HEK293 (cell line): ENCODE measurements at regions of chr2 and their contacts with region 1.

Region 1: DNA sequence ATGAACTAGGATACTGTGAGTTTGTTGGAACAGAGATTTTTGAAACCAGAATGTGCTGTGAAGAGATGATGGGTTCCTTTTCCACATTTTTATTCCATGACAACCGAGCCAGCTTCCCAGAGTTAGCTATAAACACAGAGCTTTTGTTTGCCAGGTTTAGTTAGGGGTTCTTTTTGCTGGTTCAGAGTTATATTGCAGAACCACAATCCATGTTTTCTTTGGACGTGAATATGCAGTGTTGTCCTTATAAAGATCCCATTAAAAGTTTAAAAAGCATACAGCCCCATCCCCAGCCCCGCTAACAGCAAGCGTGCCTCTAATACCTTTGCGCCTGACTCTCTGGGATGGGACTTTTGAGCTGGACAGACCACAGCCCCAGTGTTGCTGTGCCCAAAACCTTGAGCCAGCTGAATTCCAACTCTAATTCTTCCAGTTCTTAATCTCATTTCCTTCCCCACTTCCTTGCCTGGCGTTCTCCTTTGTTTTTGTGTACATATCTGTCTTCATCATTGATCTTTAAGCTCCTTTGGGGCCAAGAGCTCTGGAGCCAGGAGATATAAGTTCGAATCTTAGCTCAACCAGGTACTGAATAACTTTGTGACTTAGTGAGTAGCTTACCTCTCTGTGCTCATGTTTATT is 72.3 kb downstream of the SPATS2L start:
- H3K4me3 ChIP-seq: no peak overlapping the region
- H3K27ac ChIP-seq: peak overlapping the region; percentile 43; the same call in 1 of the 2 replicates
- H3K4me1 ChIP-seq: peaks cover 42% of the 10 kb centered on the region
- CTCF ChIP-seq: no peak

Region 2: DNA sequence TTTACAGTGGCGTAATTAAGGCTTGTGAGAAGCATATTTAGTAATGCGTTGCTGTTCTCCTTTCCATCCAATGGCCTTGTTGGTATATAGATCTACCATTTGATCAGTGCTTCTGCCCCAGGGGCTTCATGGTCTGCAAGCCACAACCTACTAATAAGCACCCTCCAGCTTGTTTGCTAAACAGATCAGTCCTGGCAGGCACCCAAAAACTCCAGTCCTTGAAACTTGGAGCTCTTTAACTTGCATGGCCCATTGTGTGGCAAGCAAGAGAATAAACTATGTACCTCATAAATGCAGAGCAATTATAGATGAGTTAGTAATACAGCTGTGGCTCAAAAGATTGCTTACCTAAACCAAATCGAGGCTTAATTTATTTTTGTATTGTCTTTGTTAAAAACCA is 686.3 kb before region 1 on chr2:
- CTCF ChIA-PET with region 1: no interaction called
- POLR2A ChIA-PET with region 1: no interaction called
- H3K4me3 ChIP-seq: no peak overlapping the region
- H3K27ac ChIP-seq: no peak overlapping the region
- H3K4me1 ChIP-seq: peaks cover 3% of the 10 kb centered on the region; the same call in 1 of the 2 replicates
- CTCF ChIP-seq: no peak

Region 3: DNA sequence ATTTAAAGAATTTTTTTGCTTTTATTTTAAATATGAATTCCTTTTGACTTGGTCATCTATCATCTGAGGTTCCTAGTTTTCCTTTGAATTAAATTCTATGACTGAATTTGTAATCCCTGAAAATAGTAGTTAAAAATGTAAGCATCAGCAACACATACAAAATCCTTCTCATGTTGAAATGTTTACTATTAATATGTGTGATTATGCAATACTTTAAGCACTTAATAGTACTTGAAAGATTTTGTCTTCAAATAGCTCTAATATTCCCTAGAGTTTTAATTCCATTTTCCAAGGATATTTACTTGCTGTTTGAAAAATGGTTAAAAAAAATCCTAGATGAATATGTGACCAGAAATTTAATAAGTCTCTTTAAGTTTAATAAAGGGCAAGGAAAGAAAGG is 98.9 kb before region 1 on chr2:
- CTCF ChIA-PET with region 1: no interaction called
- POLR2A ChIA-PET with region 1: interaction called, 10 read pairs
- H3K4me3 ChIP-seq: no peak overlapping the region
- H3K27ac ChIP-seq: no peak overlapping the region
- H3K4me1 ChIP-seq: no peaks in the 10 kb centered on the region
- CTCF ChIP-seq: no peak

Region 4: DNA sequence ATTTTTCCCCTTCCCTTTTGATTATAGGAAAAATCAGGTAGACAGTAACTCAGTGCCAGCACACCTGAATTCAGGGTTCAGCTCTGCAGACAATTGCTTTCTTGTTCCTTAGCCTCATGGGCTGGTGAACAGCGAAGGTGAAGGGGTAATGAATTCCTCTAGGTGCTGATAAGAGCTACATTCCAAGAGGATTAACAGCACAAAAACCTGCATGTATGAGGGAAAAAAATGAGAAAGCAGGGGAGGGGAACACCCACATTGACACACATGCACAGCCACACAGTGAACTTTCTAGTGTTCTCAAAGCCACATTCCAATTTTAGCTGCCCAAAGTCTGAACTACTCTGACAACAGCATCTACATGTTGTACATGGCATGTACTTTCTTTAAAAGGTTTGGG is 26.1 kb before region 1 on chr2:
- CTCF ChIA-PET with region 1: no interaction called
- POLR2A ChIA-PET with region 1: no interaction called
- H3K4me3 ChIP-seq: no peak overlapping the region
- H3K27ac ChIP-seq: no peak overlapping the region
- H3K4me1 ChIP-seq: peaks cover 11% of the 10 kb centered on the region; the same call in 1 of the 2 replicates
- CTCF ChIP-seq: no peak

Region 5: DNA sequence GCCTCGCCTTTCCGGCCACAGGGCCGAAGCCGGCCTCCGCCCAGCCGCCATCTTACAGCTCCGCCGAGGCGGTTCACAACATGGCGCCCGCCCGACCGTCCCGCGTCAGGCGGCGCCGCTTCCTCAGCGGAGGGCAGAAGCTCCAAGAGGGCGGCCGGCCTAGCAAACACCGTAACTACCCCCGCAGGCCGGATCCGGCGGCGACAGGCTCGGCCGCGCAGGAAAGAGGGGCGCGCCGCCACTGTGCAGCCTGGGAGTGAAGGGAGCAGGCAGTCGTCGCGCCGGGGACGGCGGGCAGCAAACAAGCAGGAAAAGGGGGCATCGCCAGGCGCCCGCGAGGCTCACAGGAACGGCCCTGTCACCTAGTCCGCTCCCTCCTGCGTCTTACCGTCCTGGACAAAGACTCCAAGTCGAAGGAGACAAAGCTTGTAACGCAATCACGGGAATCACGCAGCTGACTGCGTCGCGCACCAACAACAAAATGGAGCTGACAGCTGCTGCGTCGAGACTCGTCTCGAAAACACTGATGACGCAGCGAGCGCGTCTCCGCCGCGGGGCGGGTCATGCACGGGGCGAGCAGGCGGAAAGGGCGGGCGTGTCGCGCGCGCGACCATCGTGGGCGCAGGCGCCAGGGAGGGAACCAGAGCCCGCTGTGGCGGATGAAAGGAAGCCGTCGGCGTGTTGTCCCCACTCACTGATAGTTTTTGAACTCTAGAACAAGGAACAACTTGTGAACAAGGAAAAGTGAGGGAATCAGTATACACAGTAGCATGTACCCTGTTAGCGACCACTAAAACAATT is 485.6 kb after region 1 on chr2 and contains the start of gene CLK1:
- CTCF ChIA-PET with region 1: no interaction called
- POLR2A ChIA-PET with region 1: no interaction called
- H3K4me3 ChIP-seq: peak within 1 kb of the TSS; percentile 95
- H3K27ac ChIP-seq: peak within 1 kb of the TSS; percentile 97
- H3K4me1 ChIP-seq: peaks cover 12% of the 10 kb centered on the region; the same call in 1 of the 2 replicates
- CTCF ChIP-seq: peak; percentile 32; the same call in 1 of the 2 replicates